ENCODE measurements at regions of chr19 and their contacts with region 1.

Region 1: DNA sequence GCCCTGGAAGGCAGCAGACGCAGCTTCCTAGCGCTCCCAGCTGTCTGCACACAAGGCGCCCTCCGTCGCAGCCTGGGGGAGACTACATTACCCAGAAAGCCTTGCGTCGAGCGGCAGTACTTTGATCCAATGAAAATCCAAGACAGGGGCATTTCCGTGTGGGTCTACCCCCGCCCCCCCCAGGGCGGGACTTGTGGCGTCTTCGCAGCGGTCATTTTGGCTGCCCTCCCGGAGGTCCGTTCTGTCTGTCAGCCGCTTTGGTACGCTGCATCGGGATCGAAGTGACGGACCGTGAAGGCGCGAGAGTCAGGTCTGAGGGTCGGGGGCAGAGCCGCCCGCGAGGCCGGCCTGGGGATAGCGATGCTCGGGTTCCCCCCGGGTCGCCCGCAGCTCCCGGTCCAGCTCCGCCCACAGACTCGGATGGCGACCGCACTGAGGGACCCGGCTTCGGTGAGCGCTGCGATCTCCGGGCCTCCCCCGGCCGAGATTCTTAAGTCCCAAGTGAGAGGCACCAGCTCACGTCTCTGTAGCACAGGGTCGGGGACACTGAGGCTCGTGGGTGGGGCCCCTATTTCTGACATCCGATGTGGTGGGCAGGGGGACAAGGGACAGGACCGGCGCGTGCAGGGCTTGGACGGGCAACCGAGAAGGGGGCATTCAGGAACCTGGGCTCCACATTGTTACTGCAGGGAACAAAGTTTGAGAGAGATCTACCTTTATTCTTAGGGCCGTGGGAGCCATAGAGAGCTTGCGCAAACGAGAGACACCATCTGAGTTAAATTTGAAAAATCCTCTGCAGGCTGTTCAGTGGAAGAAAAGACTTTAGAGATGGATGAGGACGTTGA is at the start of gene ZNF211:
- DNase-seq: peak; percentile 87
- ATAC-seq: peak; percentile 98
- H3K4me3 Mint-ChIP-seq: peak within 1 kb of the TSS; percentile 96
- H3K27ac Mint-ChIP-seq: peak within 1 kb of the TSS; percentile 89
- H3K4me1 Mint-ChIP-seq: peaks cover 19% of the 10 kb centered on the region
- H3K27me3 Mint-ChIP-seq: no peaks in the 10 kb centered on the region
- total RNA-seq, gene ZNF211: 30.6 to 33.6 TPM

Region 2: GRCh38 chr19:57613941-57614743 is 19.1 kb before region 1 on chr19 and contains the start of gene ZNF134:
- POLR2A ChIA-PET with region 1: interaction called, 11 read pairs
- DNase-seq: peak; percentile 87
- ATAC-seq: peak; percentile 98
- H3K4me3 Mint-ChIP-seq: peak within 1 kb of the TSS; percentile 85
- H3K27ac Mint-ChIP-seq: peak within 1 kb of the TSS; percentile 79
- H3K4me1 Mint-ChIP-seq: peaks cover 23% of the 10 kb centered on the region
- H3K27me3 Mint-ChIP-seq: no peaks in the 10 kb centered on the region
- total RNA-seq, gene ZNF134: 29.7 to 34.3 TPM

Region 3: GRCh38 chr19:57664269-57665127 is 31.3 kb after region 1 on chr19:
- POLR2A ChIA-PET with region 1: no interaction called
- DNase-seq: peak; percentile 46
- ATAC-seq: peak; percentile 56
- H3K4me3 Mint-ChIP-seq: peak overlapping the region; percentile 87
- H3K27ac Mint-ChIP-seq: no peak overlapping the region
- H3K4me1 Mint-ChIP-seq: peaks cover 2% of the 10 kb centered on the region
- H3K27me3 Mint-ChIP-seq: peaks cover 31% of the 10 kb centered on the region

Region 4: GRCh38 chr19:57682226-57682766 is 49.1 kb after region 1 on chr19:
- POLR2A ChIA-PET with region 1: interaction called, 12 read pairs
- DNase-seq: no peak
- ATAC-seq: no peak
- H3K4me3 Mint-ChIP-seq: peak overlapping the region; percentile 93
- H3K27ac Mint-ChIP-seq: peak overlapping the region; percentile 93
- H3K4me1 Mint-ChIP-seq: peaks cover 21% of the 10 kb centered on the region
- H3K27me3 Mint-ChIP-seq: no peaks in the 10 kb centered on the region